ENCODE measurements at regions of chr6 and their contacts with region 1.

Region 1: GRCh38 chr6:79777713-79778579 is 146.8 kb downstream of the SH3BGRL2 start:
- DNase-seq: peak; percentile 79
- H3K4me3 ChIP-seq: peak overlapping the region in 3 of 4 donors; percentile 9 to 35 (median 28)
- H3K27ac ChIP-seq: no peak overlapping the region
- H3K4me1 ChIP-seq: peaks cover 0 to 9% (median 3%) of the 10 kb centered on the region in 4 donors
- H3K27me3 ChIP-seq: no peaks in the 10 kb centered on the region
- CTCF ChIP-seq: peak; percentile 44 to 98 (median 77)
- EP300 ChIP-seq: no peak
- POLR2A ChIP-seq: no peak

Region 2: DNA sequence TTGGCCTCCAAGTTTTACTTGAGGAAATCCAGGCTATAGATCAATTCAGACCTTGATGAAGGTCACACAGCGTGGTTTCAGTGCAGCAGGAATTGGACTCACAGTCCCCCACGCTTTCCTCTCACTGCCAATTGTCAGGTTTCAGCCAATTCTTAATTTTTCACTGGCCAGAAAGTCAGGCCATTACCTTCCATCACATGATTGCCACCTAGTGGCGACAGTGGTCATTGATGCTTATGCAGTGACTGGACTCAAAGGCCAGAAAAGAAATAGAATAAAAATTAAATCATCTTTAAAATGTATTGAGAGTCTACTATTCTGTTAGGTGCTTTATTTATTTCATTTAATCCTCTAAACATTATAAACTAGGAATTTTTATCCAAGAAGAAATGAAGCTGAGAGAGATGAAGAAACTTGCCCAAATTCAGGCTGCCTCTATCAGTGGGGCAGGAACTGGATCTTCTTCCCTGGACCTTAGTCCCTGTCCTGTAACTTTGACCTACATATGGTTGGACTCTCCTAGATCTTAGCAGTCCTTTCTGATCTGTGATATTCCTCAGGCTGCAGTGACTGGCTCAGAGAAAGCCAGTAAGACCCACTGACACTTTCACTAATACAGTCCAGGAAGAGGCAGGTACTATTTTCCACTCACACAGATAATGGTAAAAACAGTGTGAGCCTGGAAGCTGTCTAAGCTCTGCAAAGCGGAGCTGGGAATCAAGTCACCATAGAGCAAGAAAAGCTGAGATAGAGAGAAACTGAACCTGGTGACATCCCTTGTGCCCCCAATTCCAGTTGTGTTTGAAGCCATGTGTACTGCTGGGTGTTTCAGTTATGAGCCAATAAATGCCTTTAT is 36.1 kb after region 1 on chr6:
- intact Hi-C with region 1: loop called (anchors 5 kb)
- DNase-seq: peak; percentile 77
- H3K4me3 ChIP-seq: no peak overlapping the region
- H3K27ac ChIP-seq: no peak overlapping the region
- H3K4me1 ChIP-seq: peaks cover 0 to 9% (median 2%) of the 10 kb centered on the region in 4 donors
- H3K27me3 ChIP-seq: no peaks in the 10 kb centered on the region
- CTCF ChIP-seq: peak; percentile 26 to 80 (median 65)
- EP300 ChIP-seq: no peak
- POLR2A ChIP-seq: no peak

Region 3: GRCh38 chr6:79869600-79870084 is 91.7 kb after region 1 on chr6:
- intact Hi-C with region 1: loop called (anchors 1 kb)
- DNase-seq: peak; percentile 86
- H3K4me3 ChIP-seq: peak overlapping the region in 3 of 4 donors; percentile 13 to 31 (median 19)
- H3K27ac ChIP-seq: no peak overlapping the region
- H3K4me1 ChIP-seq: peaks cover 0 to 10% (median 3%) of the 10 kb centered on the region in 4 donors
- H3K27me3 ChIP-seq: no peaks in the 10 kb centered on the region
- CTCF ChIP-seq: peak; percentile 43 to 94 (median 67)
- EP300 ChIP-seq: no peak
- POLR2A ChIP-seq: no peak

Region 4: DNA sequence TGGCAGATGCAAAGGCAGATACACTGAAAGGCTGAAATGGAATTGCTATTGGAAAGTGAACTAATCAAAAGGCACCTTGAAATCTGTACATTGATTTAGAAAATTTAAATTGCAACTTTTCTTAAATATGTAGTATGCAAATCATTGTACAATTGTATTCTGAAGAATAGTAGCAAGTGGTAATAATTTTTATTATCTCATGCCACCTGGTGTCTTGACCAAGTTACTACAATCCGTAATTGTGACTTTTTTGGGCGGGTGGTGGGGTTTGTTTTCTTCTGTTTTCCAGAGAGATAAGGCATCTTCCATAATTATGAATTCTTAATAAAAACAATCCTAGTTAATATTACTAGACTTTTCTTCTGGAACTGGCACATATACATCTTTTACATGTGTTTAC is 316.1 kb after region 1 on chr6:
- intact Hi-C with region 1: loop called (anchors 5 kb)
- DNase-seq: no peak
- H3K4me3 ChIP-seq: no peak overlapping the region
- H3K27ac ChIP-seq: no peak overlapping the region
- H3K4me1 ChIP-seq: no peaks in the 10 kb centered on the region
- H3K27me3 ChIP-seq: no peaks in the 10 kb centered on the region
- CTCF ChIP-seq: peak in 3 of 4 experiments; percentile 31 to 61 (median 41)
- EP300 ChIP-seq: no peak
- POLR2A ChIP-seq: no peak